Calu3 (cell line): ENCODE measurements at regions of chr1 and their contacts with region 1.

Region 1: GRCh38 chr1:90000934-90001676 is 6.2 kb downstream of the ZNF326 start:
- DNase-seq: no peak
- H3K4me3 Mint-ChIP-seq: no peak overlapping the region
- H3K27ac Mint-ChIP-seq: no peak overlapping the region
- H3K4me1 Mint-ChIP-seq: peaks cover 46% of the 10 kb centered on the region
- H3K27me3 Mint-ChIP-seq: no peaks in the 10 kb centered on the region
- CTCF ChIP-seq: no peak

Region 2: GRCh38 chr1:89499320-89499719 is 501.8 kb before region 1 on chr1:
- CTCF ChIA-PET with region 1: no interaction called
- intact Hi-C with region 1: no loop called
- DNase-seq: no peak
- H3K4me3 Mint-ChIP-seq: no peak overlapping the region
- H3K27ac Mint-ChIP-seq: no peak overlapping the region
- H3K4me1 Mint-ChIP-seq: no peaks in the 10 kb centered on the region
- H3K27me3 Mint-ChIP-seq: no peaks in the 10 kb centered on the region
- CTCF ChIP-seq: no peak

Region 3: DNA sequence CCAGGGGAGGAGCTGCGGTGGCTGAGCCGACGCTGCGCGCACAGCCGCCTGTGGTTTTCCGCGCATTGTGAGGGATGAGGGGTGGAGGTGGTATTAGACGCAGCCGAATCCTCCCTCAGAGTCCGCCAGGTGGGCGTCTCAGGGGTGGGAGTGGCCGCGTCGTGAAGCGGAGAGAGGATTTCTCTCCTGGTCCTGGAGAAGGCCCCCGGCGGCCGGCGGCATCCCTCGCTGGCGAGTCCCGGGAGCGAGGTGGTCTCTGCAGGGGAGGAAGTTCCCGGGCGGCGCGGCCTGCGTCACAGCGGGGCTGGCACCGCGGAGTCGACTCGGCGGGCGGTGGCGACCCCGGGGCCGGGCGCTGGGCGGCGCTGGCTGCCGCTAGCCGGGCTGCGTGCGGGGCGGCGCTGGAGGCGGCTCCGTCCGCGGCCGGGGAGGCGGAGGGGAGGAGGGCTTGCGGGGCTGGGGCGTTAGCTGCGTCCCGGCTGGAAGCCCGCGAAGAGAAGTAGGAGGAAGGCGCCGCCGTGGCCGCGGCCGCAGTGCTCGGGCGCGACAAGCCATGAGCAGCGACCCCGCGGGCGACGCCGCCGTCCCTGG is 368.4 kb before region 1 on chr1 and contains the start of gene LRRC8C:
- CTCF ChIA-PET with region 1: no interaction called
- intact Hi-C with region 1: loop called (anchors 10 kb)
- DNase-seq: peak; percentile 88
- H3K4me3 Mint-ChIP-seq: peak within 1 kb of the TSS; percentile 89
- H3K27ac Mint-ChIP-seq: peak within 1 kb of the TSS; percentile 75
- H3K4me1 Mint-ChIP-seq: peaks cover 11% of the 10 kb centered on the region
- H3K27me3 Mint-ChIP-seq: no peaks in the 10 kb centered on the region
- CTCF ChIP-seq: peak; percentile 39
- total RNA-seq, gene LRRC8C: 2.7 and 3.5 TPM in 2 replicates

Region 4: GRCh38 chr1:90457985-90458384 is 456.9 kb after region 1 on chr1:
- CTCF ChIA-PET with region 1: no interaction called
- intact Hi-C with region 1: no loop called
- DNase-seq: no peak
- H3K4me3 Mint-ChIP-seq: no peak overlapping the region
- H3K27ac Mint-ChIP-seq: no peak overlapping the region
- H3K4me1 Mint-ChIP-seq: no peaks in the 10 kb centered on the region
- H3K27me3 Mint-ChIP-seq: peaks cover 28% of the 10 kb centered on the region
- CTCF ChIP-seq: no peak